ENCODE measurements at regions of chr3 and their contacts with region 1.

Region 1: GRCh38 chr3:65070968-65071367 is 383.2 kb upstream of the ADAMTS9 start:
- DNase-seq: no peak
- ATAC-seq: no peak
- H3K4me3 ChIP-seq: no peak overlapping the region
- H3K27ac ChIP-seq: no peak overlapping the region
- H3K4me1 ChIP-seq: no peaks in the 10 kb centered on the region
- H3K27me3 ChIP-seq: no peaks in the 10 kb centered on the region
- CTCF ChIP-seq: no peak

Region 2: GRCh38 chr3:63892773-63893352 is 1178.1 kb before region 1 on chr3:
- CTCF ChIA-PET with region 1: interaction called, 24 read pairs
- POLR2A ChIA-PET with region 1: no interaction called
- in situ Hi-C with region 1: no loop called
- intact Hi-C with region 1: no loop called
- DNase-seq: no peak
- ATAC-seq: no peak
- H3K4me3 ChIP-seq: no peak overlapping the region
- H3K27ac ChIP-seq: no peak overlapping the region
- H3K4me1 ChIP-seq: no peaks in the 10 kb centered on the region
- H3K27me3 ChIP-seq: no peaks in the 10 kb centered on the region
- CTCF ChIP-seq: no peak

Region 3: DNA sequence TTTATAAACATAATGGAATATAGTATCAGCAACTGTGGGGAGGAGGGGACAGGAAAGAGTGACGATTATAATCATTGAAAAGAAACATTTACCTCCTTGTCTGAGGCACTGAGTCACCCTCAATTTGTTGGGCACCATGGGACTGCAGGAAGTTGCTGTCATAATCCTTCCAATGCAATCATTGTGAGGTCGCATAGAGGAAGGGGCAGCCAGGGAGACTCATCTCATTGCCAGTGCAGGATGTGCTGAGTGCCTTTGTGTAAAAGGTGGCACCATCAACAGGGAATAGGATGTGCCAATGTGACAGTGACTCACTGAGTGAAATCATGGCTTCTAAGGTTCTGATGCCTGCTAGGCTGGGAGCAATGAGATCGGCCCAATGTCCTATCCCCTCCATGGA is 82.8 kb before region 1 on chr3:
- CTCF ChIA-PET with region 1: no interaction called
- POLR2A ChIA-PET with region 1: no interaction called
- in situ Hi-C with region 1: no loop called
- intact Hi-C with region 1: no loop called
- DNase-seq: no peak
- ATAC-seq: no peak
- H3K4me3 ChIP-seq: no peak overlapping the region
- H3K27ac ChIP-seq: no peak overlapping the region
- H3K4me1 ChIP-seq: no peaks in the 10 kb centered on the region
- H3K27me3 ChIP-seq: no peaks in the 10 kb centered on the region
- CTCF ChIP-seq: no peak

Measured in Panc1 (cell line).